Ovary (tissue), 10 donors: ENCODE measurements at regions of chr5 and their contacts with region 1.

Region 1: GRCh38 chr5:54310433-54311175 is at the start of gene ARL15:
- DNase-seq: peak; percentile 98 to 99 (median 98)
- H3K4me3 ChIP-seq: peak within 1 kb of the TSS; percentile 83
- H3K27ac ChIP-seq: peak within 1 kb of the TSS; percentile 46 to 68
- H3K4me1 ChIP-seq: no peaks in the 10 kb centered on the region
- H3K27me3 ChIP-seq: no peaks in the 10 kb centered on the region
- CTCF ChIP-seq: peak in 1 of 3 donors; percentile 21
- EP300 ChIP-seq: no peak
- POLR2A ChIP-seq: peak; percentile 98
- total RNA-seq, gene ARL15: 14.9 to 30.8 (median 19.0) TPM

Region 2: GRCh38 chr5:54415896-54416601 is 105.4 kb after region 1 on chr5:
- intact Hi-C with region 1: loop called in 1 of 4 experiments (anchors 10 kb)
- DNase-seq: no peak
- H3K4me3 ChIP-seq: no peak overlapping the region
- H3K27ac ChIP-seq: no peak overlapping the region
- H3K4me1 ChIP-seq: no peaks in the 10 kb centered on the region
- H3K27me3 ChIP-seq: no peaks in the 10 kb centered on the region
- CTCF ChIP-seq: no peak
- EP300 ChIP-seq: no peak
- POLR2A ChIP-seq: no peak

Region 3: GRCh38 chr5:54480296-54480695 is 169.7 kb after region 1 on chr5:
- intact Hi-C with region 1: loop called in 1 of 4 experiments (anchors 10 kb)
- DNase-seq: no peak
- H3K4me3 ChIP-seq: no peak overlapping the region
- H3K27ac ChIP-seq: no peak overlapping the region
- H3K4me1 ChIP-seq: no peaks in the 10 kb centered on the region
- H3K27me3 ChIP-seq: no peaks in the 10 kb centered on the region
- CTCF ChIP-seq: no peak
- EP300 ChIP-seq: no peak
- POLR2A ChIP-seq: no peak